Activated naive CD4-positive, alpha-beta T cell treated with anti-CD3 and anti-CD28 coated beads for 36 hours (primary cell): ENCODE measurements at regions of chr4 and their contacts with region 1.

Region 1: GRCh38 chr4:76341063-76341462 is 34.5 kb downstream of the STBD1 start:
- DNase-seq: no peak
- H3K4me3 Mint-ChIP-seq: no peak overlapping the region
- H3K27ac Mint-ChIP-seq: no peak overlapping the region
- H3K4me1 Mint-ChIP-seq: no peaks in the 10 kb centered on the region
- H3K27me3 Mint-ChIP-seq: no peaks in the 10 kb centered on the region

Region 2: GRCh38 chr4:76407440-76408119 is 66.5 kb after region 1 on chr4:
- CTCF ChIA-PET with region 1: no interaction called
- intact Hi-C with region 1: loop called (anchors 10 kb)
- DNase-seq: no peak
- H3K4me3 Mint-ChIP-seq: no peak overlapping the region
- H3K27ac Mint-ChIP-seq: no peak overlapping the region
- H3K4me1 Mint-ChIP-seq: peaks cover 4% of the 10 kb centered on the region
- H3K27me3 Mint-ChIP-seq: peaks cover 7% of the 10 kb centered on the region

Region 3: GRCh38 chr4:76535603-76536367 is 194.7 kb after region 1 on chr4:
- CTCF ChIA-PET with region 1: no interaction called
- intact Hi-C with region 1: no loop called
- DNase-seq: no peak
- H3K4me3 Mint-ChIP-seq: no peak overlapping the region
- H3K27ac Mint-ChIP-seq: no peak overlapping the region
- H3K4me1 Mint-ChIP-seq: no peaks in the 10 kb centered on the region
- H3K27me3 Mint-ChIP-seq: no peaks in the 10 kb centered on the region